H1 (cell line): ENCODE measurements at regions of chr16 and their contacts with region 1.

Region 1: GRCh38 chr16:30355144-30355894 is at the start of gene CD2BP2:
- DNase-seq: peak; percentile 92 to 96
- H3K4me3 ChIP-seq: peak within 1 kb of the TSS; percentile 51 to 93 (median 81)
- H3K27ac ChIP-seq: peak within 1 kb of the TSS; percentile 97
- H3K4me1 ChIP-seq: peaks cover 0 to 12% (median 6%) of the 10 kb centered on the region in 4 experiments; a peak in 5 of 7 replicates
- H3K27me3 ChIP-seq: no peaks in the 10 kb centered on the region
- CTCF ChIP-seq: peak in 2 of 3 experiments; percentile 5 to 10; a peak in 2 of 4 replicates
- EP300 ChIP-seq: peak in 1 of 2 experiments; percentile 17; a peak in 1 of 3 replicates
- POLR2A ChIP-seq: peak; percentile 67 to 90
- RAD21 ChIP-seq: 0 out of 4 replicates have a peak, but pooled peaks of 1 of the 2 experiments have one; percentile 1
- total RNA-seq, gene CD2BP2: 55.3 and 55.4 TPM in 2 replicates

Region 2: DNA sequence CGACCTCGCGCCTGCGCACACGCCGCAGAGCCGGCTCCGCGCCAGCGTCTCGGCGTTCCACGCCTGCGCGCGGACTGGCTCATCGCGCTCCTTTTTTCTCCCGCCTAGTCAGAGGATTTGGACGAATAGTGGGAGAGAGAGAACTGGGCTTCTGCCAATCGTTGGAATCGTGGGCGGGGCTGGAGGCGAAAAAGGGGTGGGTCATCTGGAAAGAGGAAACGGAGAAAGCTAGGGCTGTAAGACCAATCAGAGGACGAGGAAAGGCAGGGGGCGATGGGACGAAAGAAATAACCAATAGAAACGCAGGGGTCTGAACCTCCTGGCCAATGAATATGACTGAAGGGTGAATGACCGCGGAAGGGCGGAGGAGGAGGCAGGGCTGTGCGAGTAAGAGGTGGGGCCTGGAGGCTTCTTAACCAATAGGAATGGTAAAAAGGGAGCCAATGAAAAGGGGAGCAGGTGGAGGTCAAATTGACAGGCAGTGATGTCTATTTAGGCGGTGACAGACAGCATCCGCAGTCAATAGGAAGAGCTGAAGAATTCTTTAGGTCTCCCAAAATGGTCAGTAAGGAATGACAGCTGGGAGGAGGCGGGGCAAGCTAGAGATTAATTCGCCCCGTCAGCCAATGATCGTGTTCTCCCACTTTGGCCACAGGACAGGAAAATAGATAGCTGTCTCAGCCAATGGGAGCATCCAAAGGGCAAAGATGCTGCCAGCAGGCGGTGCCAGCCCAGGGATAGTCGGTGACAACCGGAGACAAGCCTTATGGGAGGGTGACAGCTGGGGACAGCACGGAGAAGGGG is 15.3 kb after region 1 on chr16 and contains the start of gene TBC1D10B:
- CTCF ChIA-PET with region 1: interaction called, 12 read pairs
- POLR2A ChIA-PET with region 1: interaction called, 79 read pairs
- DNase-seq: peak; percentile 97 to 100
- H3K4me3 ChIP-seq: peak within 1 kb of the TSS; percentile 43 to 81 (median 52)
- H3K27ac ChIP-seq: no peak within 1 kb of the TSS
- H3K4me1 ChIP-seq: peaks cover 0 to 17% (median 11%) of the 10 kb centered on the region in 4 experiments; a peak in 6 of 7 replicates
- H3K27me3 ChIP-seq: no peaks in the 10 kb centered on the region
- CTCF ChIP-seq: peak in 2 of 3 experiments; percentile 25 to 31; a peak in 2 of 4 replicates
- EP300 ChIP-seq: no peak
- POLR2A ChIP-seq: no peak
- RAD21 ChIP-seq: no peak
- total RNA-seq, gene TBC1D10B: 28.6 and 29.4 TPM in 2 replicates

Region 3: GRCh38 chr16:30378236-30379204 is 23.2 kb after region 1 on chr16:
- CTCF ChIA-PET with region 1: interaction called, 3 read pairs
- POLR2A ChIA-PET with region 1: interaction called, 22 read pairs
- DNase-seq: peak; percentile 92 to 99
- H3K4me3 ChIP-seq: peak overlapping the region; percentile 70 to 88 (median 82)
- H3K27ac ChIP-seq: peak overlapping the region; percentile 92
- H3K4me1 ChIP-seq: peaks cover 0 to 9% (median 5%) of the 10 kb centered on the region in 4 experiments; a peak in 5 of 7 replicates
- H3K27me3 ChIP-seq: no peaks in the 10 kb centered on the region
- CTCF ChIP-seq: no peak
- EP300 ChIP-seq: no peak
- POLR2A ChIP-seq: peak; percentile 29 to 64; a peak in 2 of 3 replicates
- RAD21 ChIP-seq: no peak

Region 4: DNA sequence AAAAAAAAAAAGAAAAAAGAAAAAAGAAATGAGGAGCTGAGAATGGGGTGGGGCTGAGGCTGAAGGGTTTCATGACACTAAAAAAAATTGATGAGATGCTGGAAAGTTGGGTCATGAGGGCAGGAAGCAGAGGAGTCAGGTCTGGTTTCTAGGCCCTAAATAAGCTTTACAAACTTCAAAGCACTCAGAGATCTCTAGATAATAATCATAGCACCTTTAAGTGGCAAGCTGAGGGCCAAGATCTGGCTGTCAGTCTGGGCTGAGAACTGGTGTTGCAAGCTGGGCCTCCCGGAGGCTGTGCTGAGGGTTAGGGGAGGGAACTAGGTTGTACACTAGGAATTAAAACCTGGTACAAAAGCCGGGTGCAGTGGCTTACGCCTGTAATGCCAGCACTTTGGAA is 196.5 kb after region 1 on chr16:
- CTCF ChIA-PET with region 1: no interaction called
- POLR2A ChIA-PET with region 1: no interaction called
- DNase-seq: no peak
- H3K4me3 ChIP-seq: no peak overlapping the region
- H3K27ac ChIP-seq: no peak overlapping the region
- H3K4me1 ChIP-seq: peaks cover 5 to 11% (median 6%) of the 10 kb centered on the region in 4 experiments
- H3K27me3 ChIP-seq: no peaks in the 10 kb centered on the region
- CTCF ChIP-seq: no peak
- EP300 ChIP-seq: no peak
- POLR2A ChIP-seq: no peak
- RAD21 ChIP-seq: no peak

Region 5: GRCh38 chr16:30571695-30572600 is 216.6 kb after region 1 on chr16 and contains the start of gene ZNF688:
- CTCF ChIA-PET with region 1: no interaction called
- POLR2A ChIA-PET with region 1: no interaction called
- DNase-seq: peak; percentile 90 to 91
- H3K4me3 ChIP-seq: peak within 1 kb of the TSS; percentile 78 to 89 (median 82)
- H3K27ac ChIP-seq: peak within 1 kb of the TSS; percentile 64; the same call in 1 of the 2 replicates
- H3K4me1 ChIP-seq: peaks cover 0 to 9% (median 2%) of the 10 kb centered on the region in 4 experiments; a peak in 5 of 7 replicates
- H3K27me3 ChIP-seq: no peaks in the 10 kb centered on the region
- CTCF ChIP-seq: no peak
- EP300 ChIP-seq: no peak
- POLR2A ChIP-seq: peak in 1 of 2 experiments; percentile 42
- RAD21 ChIP-seq: no peak
- total RNA-seq, gene ZNF688: 3.5 and 3.7 TPM in 2 replicates